Activated naive CD4-positive, alpha-beta T cell treated with anti-CD3 and anti-CD28 coated beads for 36 hours (primary cell): ENCODE measurements at regions of chr6 and their contacts with region 1.

Region 1: DNA sequence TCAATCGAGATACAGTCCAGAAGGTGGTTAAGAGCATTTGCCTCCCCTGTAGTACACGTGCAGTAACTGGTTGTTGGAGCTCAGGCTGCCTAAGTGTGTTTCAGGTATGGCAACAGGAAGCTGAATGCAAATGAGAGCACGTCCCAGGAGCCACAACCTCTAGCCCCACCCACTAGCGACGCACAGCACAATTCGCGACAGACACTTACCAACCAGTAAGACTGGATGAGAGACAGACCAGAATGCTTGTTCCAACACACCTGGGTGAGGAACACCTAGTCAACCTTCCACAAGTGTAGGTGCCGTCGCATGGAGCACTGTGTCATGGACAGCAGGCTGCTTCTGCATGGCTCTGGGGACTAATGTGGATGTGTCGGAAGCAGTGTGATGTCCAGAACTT is 7.2 kb upstream of the SERPINB1 start:
- DNase-seq: peak; percentile 89
- H3K4me3 Mint-ChIP-seq: peak overlapping the region; percentile 63
- H3K27ac Mint-ChIP-seq: peak overlapping the region; percentile 84
- H3K4me1 Mint-ChIP-seq: peaks cover 51% of the 10 kb centered on the region
- H3K27me3 Mint-ChIP-seq: no peaks in the 10 kb centered on the region

Region 2: GRCh38 chr6:2706558-2706957 is 142.3 kb before region 1 on chr6:
- CTCF ChIA-PET with region 1: no interaction called
- intact Hi-C with region 1: no loop called
- DNase-seq: no peak
- H3K4me3 Mint-ChIP-seq: no peak overlapping the region
- H3K27ac Mint-ChIP-seq: no peak overlapping the region
- H3K4me1 Mint-ChIP-seq: peaks cover 2% of the 10 kb centered on the region
- H3K27me3 Mint-ChIP-seq: peaks cover 11% of the 10 kb centered on the region

Region 3: DNA sequence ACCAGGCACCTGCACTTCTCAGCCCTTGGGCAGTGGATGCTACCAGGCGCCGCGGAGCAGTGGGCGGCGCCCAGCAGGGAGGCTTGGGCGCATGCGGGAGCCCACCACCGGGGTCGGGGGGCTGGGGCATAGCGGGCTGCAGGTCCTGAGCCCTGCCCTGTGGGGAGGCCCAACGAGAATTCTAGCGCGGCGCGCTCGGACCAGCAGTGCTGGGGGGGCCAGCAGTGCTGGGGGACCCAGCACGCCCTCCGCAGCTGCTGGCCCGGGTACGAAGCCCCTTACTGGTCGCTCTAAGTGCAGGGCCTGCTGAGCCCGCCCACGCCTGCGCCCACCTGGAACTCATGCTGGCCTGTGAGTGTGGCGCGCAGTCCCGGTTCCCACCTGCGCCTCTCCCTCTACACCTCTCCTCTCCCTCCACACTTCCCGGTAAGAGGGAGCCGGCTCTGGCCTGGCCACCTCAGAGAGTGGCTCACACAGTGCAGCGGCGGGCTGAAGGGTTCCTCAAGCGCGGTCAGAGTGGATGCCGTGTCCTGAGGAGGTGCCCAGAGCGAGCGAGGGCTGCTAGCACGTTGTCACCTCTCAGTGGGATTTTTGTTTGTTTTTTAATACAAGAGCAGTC is 21.3 kb after region 1 on chr6:
- CTCF ChIA-PET with region 1: interaction called, 11 read pairs
- intact Hi-C with region 1: no loop called
- DNase-seq: no peak
- H3K4me3 Mint-ChIP-seq: no peak overlapping the region
- H3K27ac Mint-ChIP-seq: no peak overlapping the region
- H3K4me1 Mint-ChIP-seq: peaks cover 59% of the 10 kb centered on the region
- H3K27me3 Mint-ChIP-seq: no peaks in the 10 kb centered on the region

Region 4: GRCh38 chr6:2900821-2901644 is 52.2 kb after region 1 on chr6:
- CTCF ChIA-PET with region 1: interaction called, 32 read pairs
- intact Hi-C with region 1: no loop called
- DNase-seq: no peak
- H3K4me3 Mint-ChIP-seq: peak overlapping the region; percentile 99
- H3K27ac Mint-ChIP-seq: peak overlapping the region; percentile 96
- H3K4me1 Mint-ChIP-seq: peaks cover 52% of the 10 kb centered on the region
- H3K27me3 Mint-ChIP-seq: no peaks in the 10 kb centered on the region

Region 5: DNA sequence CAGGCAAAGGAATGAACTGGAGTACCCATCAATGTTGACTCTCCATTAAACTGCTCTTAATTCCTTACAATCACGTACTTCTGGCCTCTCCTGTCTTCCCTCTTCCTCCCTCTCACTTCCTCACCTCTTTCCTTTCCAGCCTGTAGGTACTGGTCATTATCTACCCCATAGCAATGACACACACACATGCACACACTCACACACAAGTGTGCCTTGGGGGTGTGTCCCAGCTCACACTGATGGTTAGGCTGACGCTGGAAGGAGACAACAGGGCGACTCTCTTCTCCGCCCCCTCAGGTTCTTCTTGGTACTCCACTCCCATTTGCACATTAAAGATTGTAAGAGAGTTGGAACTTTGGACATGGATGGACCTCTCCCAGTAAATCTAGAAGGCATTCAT is 68.2 kb after region 1 on chr6:
- CTCF ChIA-PET with region 1: interaction called, 63 read pairs
- intact Hi-C with region 1: no loop called
- DNase-seq: no peak
- H3K4me3 Mint-ChIP-seq: no peak overlapping the region
- H3K27ac Mint-ChIP-seq: no peak overlapping the region
- H3K4me1 Mint-ChIP-seq: peaks cover 13% of the 10 kb centered on the region
- H3K27me3 Mint-ChIP-seq: no peaks in the 10 kb centered on the region

Region 6: GRCh38 chr6:2952557-2953095 is 103.8 kb after region 1 on chr6:
- CTCF ChIA-PET with region 1: interaction called, 10 read pairs
- intact Hi-C with region 1: no loop called
- DNase-seq: peak; percentile 43
- H3K4me3 Mint-ChIP-seq: no peak overlapping the region
- H3K27ac Mint-ChIP-seq: no peak overlapping the region
- H3K4me1 Mint-ChIP-seq: peaks cover 8% of the 10 kb centered on the region
- H3K27me3 Mint-ChIP-seq: no peaks in the 10 kb centered on the region

Region 7: DNA sequence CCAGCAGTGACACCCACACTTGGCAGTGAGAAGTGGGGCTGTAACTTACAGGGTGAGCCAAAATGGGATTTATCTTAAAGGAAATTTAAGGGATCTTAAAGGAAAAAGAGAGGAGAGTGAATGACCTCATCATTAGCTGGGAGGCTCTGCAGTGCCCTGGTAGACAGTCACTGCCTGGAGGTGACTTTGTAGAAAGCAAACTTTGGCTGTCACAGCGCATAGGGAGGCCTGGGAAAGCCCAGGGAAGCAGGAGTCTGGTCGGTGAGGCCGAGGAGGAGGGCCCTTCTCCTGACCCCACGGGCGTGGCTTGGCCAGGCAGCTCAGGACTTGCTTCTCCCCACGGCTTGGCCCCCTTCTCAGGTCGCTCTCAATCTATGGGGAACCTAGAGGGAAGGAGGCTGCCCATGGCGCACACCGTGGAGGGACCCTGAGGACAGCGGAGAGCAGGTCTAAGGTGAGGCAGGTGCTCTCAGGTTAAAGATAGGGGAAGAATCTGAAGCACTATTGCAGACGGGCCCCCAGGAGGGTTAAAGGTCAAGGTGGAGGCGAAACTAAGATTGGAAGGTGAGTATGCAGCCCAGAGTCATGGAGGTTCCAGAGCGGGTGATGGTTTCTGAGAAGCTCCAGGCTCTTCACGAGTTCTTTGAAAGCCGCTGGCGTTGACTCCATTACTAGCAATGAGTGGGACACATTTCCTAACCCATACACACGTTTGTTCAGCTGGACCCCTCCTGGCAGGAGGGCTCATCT is 203.8 kb after region 1 on chr6:
- CTCF ChIA-PET with region 1: interaction called, 4 read pairs
- intact Hi-C with region 1: loop called (anchors 1 kb)
- DNase-seq: no peak
- H3K4me3 Mint-ChIP-seq: peak overlapping the region; percentile 74
- H3K27ac Mint-ChIP-seq: no peak overlapping the region
- H3K4me1 Mint-ChIP-seq: peaks cover 17% of the 10 kb centered on the region
- H3K27me3 Mint-ChIP-seq: no peaks in the 10 kb centered on the region